IMR-90 (cell line): ENCODE measurements at regions of chr20 and their contacts with region 1.

Region 1: GRCh38 chr20:45322952-45323383 is 14.9 kb upstream of the MATN4 start:
- DNase-seq: peak; percentile 43
- ATAC-seq: peak; percentile 8; the same call in 1 of the 2 replicates
- H3K4me3 ChIP-seq: no peak overlapping the region
- H3K27ac ChIP-seq: no peak overlapping the region
- H3K4me1 ChIP-seq: no peaks in the 10 kb centered on the region
- H3K27me3 ChIP-seq: peaks cover 5% of the 10 kb centered on the region; the same call in 1 of the 2 replicates
- CTCF ChIP-seq: peak; percentile 30; the same call in 1 of the 2 replicates
- POLR2A ChIP-seq: no peak
- RAD21 ChIP-seq: peak; percentile 30; the same call in 1 of the 2 replicates

Region 2: GRCh38 chr20:45235995-45236394 is 87.0 kb before region 1 on chr20:
- CTCF ChIA-PET with region 1: no interaction called
- POLR2A ChIA-PET with region 1: no interaction called
- dilution Hi-C with region 1: no loop called
- in situ Hi-C with region 1: no loop called
- intact Hi-C with region 1: no loop called
- DNase-seq: no peak
- ATAC-seq: no peak
- H3K4me3 ChIP-seq: no peak overlapping the region
- H3K27ac ChIP-seq: no peak overlapping the region
- H3K4me1 ChIP-seq: no peaks in the 10 kb centered on the region
- H3K27me3 ChIP-seq: peaks cover 4% of the 10 kb centered on the region
- CTCF ChIP-seq: 0 out of 2 replicates have a peak, but pooled peaks have one; percentile 10
- POLR2A ChIP-seq: no peak
- RAD21 ChIP-seq: no peak

Region 3: GRCh38 chr20:45415774-45416637 is 93.0 kb after region 1 on chr20 and contains the start of gene PIGT:
- CTCF ChIA-PET with region 1: no interaction called
- POLR2A ChIA-PET with region 1: no interaction called
- dilution Hi-C with region 1: no loop called
- in situ Hi-C with region 1: no loop called
- intact Hi-C with region 1: no loop called
- DNase-seq: peak; percentile 72
- ATAC-seq: peak; percentile 97
- H3K4me3 ChIP-seq: peak within 1 kb of the TSS; percentile 90
- H3K27ac ChIP-seq: peak within 1 kb of the TSS; percentile 90
- H3K4me1 ChIP-seq: peaks cover 9% of the 10 kb centered on the region; the same call in 1 of the 2 replicates
- H3K27me3 ChIP-seq: no peaks in the 10 kb centered on the region
- CTCF ChIP-seq: 0 out of 2 replicates have a peak, but pooled peaks have one; percentile 0
- POLR2A ChIP-seq: peak; percentile 91
- RAD21 ChIP-seq: peak; percentile 18; the same call in 1 of the 2 replicates
- total RNA-seq, gene PIGT: 27.2 and 31.2 TPM in 2 replicates

Region 4: GRCh38 chr20:45436732-45437391 is 113.9 kb after region 1 on chr20:
- CTCF ChIA-PET with region 1: interaction called, 30 read pairs
- POLR2A ChIA-PET with region 1: no interaction called
- dilution Hi-C with region 1: no loop called
- in situ Hi-C with region 1: loop called (anchors 5 kb)
- intact Hi-C with region 1: loop called (anchors 1 kb)
- DNase-seq: peak; percentile 81
- ATAC-seq: peak; percentile 100
- H3K4me3 ChIP-seq: peak overlapping the region; percentile 75
- H3K27ac ChIP-seq: peak overlapping the region; percentile 42
- H3K4me1 ChIP-seq: no peaks in the 10 kb centered on the region
- H3K27me3 ChIP-seq: peaks cover 3% of the 10 kb centered on the region
- CTCF ChIP-seq: peak; percentile 91
- POLR2A ChIP-seq: 0 out of 2 replicates have a peak, but pooled peaks have one; percentile 37
- RAD21 ChIP-seq: peak; percentile 91

Region 5: GRCh38 chr20:45450097-45450818 is 127.3 kb after region 1 on chr20:
- CTCF ChIA-PET with region 1: interaction called, 10 read pairs
- POLR2A ChIA-PET with region 1: no interaction called
- dilution Hi-C with region 1: no loop called
- in situ Hi-C with region 1: no loop called
- intact Hi-C with region 1: no loop called
- DNase-seq: peak; percentile 51
- ATAC-seq: peak; percentile 72
- H3K4me3 ChIP-seq: no peak overlapping the region
- H3K27ac ChIP-seq: no peak overlapping the region
- H3K4me1 ChIP-seq: no peaks in the 10 kb centered on the region
- H3K27me3 ChIP-seq: peaks cover 12% of the 10 kb centered on the region
- CTCF ChIP-seq: peak; percentile 59
- POLR2A ChIP-seq: no peak
- RAD21 ChIP-seq: peak; percentile 44